CD8-positive, alpha-beta T cell (primary cell): ENCODE measurements at regions of chr1 and their contacts with region 1.

Region 1: DNA sequence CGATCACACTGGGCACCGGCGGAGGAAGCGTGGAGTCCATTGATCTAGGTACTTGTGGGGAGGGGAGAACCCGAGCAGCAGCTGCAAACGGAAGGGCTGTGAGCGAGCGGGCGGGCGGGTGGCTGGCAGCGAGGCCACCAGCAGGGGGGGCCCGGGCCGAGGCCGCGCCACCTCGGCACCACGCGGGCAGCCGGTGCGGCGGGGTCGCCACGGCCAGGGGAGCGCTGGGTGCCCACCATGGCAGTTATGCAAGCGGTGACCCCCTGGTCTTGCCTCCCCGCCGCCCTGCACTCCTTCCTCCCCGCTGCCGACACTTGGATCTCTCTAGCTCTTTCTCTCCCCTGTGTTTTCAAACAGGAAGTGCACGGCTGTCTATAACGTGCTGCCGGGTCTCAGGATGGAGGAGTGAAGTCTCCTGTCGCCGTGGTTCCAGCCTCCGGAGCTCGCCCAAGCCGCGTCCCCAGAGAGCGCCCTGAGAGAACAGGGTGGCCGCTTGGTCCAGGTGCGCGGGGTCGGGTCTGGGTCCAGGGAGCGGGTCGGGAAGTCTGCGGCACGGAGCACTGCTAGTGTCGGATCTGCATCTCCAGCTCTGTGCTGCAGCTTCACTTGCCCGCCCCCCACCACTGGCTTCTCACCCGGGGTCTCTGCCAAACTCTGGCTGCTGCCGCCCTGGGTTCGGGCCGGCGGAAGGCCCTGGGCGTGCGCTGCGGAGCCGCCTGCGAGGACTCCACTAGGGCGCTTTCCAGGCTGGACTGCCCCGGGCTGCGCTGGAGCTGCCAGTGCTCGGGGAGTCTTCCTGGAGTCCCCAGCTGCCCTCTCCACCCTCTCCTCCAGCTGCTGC is 22.7 kb downstream of the LRRC8D start:
- DNase-seq: peak; percentile 55 to 89 (median 77)
- ATAC-seq: peak; percentile 77
- H3K4me3 ChIP-seq: peak overlapping the region; percentile 79 to 92
- H3K4me3 Mint-ChIP-seq: peak overlapping the region; percentile 97
- H3K27ac ChIP-seq: peak overlapping the region; percentile 56 to 75
- H3K27ac Mint-ChIP-seq: peak overlapping the region; percentile 92
- H3K4me1 ChIP-seq: peaks cover 36% of the 10 kb centered on the region
- H3K4me1 Mint-ChIP-seq: peaks cover 53% of the 10 kb centered on the region
- H3K27me3 ChIP-seq: no peaks in the 10 kb centered on the region
- H3K27me3 Mint-ChIP-seq: no peaks in the 10 kb centered on the region
- CTCF ChIP-seq: peak; percentile 79

Region 2: DNA sequence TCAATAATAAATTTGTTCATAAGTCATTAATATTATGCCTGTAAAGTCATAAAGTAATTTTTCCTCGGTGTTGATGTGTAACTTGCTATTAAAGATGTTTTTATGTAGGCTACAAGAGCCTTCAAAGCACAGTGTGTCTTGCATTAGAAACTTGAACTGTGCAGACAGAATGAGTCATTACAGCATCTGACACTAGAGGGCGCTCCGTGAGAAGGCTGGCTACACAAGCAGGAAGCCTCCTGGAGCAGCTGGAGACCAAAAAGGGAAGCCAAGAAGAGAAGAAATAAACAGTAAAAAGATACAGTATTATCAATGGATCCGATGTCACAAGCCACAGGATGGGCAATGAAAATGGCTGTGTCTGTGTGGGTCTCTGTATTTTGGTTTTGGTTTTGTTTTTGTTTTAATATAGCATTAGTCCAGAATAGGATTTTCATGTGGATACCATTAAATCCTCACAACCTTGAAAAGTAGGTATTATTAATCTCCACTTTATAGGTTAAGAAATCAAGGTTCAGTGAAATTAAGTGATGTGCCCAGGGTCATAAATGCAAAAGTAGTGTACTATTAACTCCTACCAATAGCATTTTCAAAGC is 38.8 kb before region 1 on chr1:
- CTCF ChIA-PET with region 1: interaction called, 33 read pairs
- POLR2A ChIA-PET with region 1: interaction called, 4 read pairs
- intact Hi-C with region 1: loop called in 1 of 2 experiments (anchors 1 kb)
- DNase-seq: peak; percentile 68 to 91 (median 85)
- ATAC-seq: peak; percentile 93
- H3K4me3 ChIP-seq: no peak overlapping the region
- H3K4me3 Mint-ChIP-seq: no peak overlapping the region
- H3K27ac ChIP-seq: no peak overlapping the region
- H3K27ac Mint-ChIP-seq: no peak overlapping the region
- H3K4me1 ChIP-seq: no peaks in the 10 kb centered on the region
- H3K4me1 Mint-ChIP-seq: no peaks in the 10 kb centered on the region
- H3K27me3 ChIP-seq: no peaks in the 10 kb centered on the region
- H3K27me3 Mint-ChIP-seq: peaks cover 2% of the 10 kb centered on the region
- CTCF ChIP-seq: peak; percentile 91

Region 3: DNA sequence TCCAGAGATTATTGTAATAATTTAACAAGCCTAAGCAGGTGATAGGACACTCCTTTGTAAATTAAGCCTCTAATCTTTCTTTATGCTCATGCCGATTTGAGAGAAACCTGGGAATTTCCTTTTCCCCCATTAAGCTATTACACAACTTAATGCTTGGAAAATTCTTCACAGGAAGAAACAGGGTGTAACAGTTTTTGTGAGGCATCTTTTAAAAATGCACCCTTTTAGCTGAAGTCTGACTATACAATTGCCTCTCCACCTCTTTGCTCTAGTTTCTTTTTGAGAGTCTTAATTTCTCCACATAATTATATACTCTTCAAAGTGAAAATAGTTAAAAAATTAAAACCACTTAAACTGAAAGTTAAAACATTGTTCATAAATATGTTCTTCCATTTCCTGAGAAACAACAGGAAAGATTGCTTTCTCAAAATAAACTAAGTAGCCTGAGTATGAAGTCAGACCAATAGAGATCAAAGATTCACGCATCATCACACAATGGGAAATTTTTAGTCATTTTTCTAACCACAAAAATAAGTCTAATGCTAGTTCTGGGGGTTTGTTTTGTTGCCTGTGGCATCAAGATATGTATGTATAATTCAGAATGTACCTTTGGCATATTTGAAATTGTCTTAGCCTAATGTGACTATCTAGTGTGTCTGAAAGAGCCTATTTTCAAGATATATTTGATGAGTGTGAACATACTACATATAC is 12.1 kb after region 1 on chr1:
- CTCF ChIA-PET with region 1: interaction called, 14 read pairs
- POLR2A ChIA-PET with region 1: interaction called, 18 read pairs
- intact Hi-C with region 1: loop called (anchors 1 kb)
- DNase-seq: peak in 2 of 9 experiments; percentile 62 to 83
- ATAC-seq: peak; percentile 80
- H3K4me3 ChIP-seq: no peak overlapping the region
- H3K4me3 Mint-ChIP-seq: no peak overlapping the region
- H3K27ac ChIP-seq: peak overlapping the region; percentile 43 to 66
- H3K27ac Mint-ChIP-seq: no peak overlapping the region
- H3K4me1 ChIP-seq: peaks cover 38% of the 10 kb centered on the region
- H3K4me1 Mint-ChIP-seq: peaks cover 18% of the 10 kb centered on the region
- H3K27me3 ChIP-seq: no peaks in the 10 kb centered on the region
- H3K27me3 Mint-ChIP-seq: no peaks in the 10 kb centered on the region
- CTCF ChIP-seq: no peak

Region 4: DNA sequence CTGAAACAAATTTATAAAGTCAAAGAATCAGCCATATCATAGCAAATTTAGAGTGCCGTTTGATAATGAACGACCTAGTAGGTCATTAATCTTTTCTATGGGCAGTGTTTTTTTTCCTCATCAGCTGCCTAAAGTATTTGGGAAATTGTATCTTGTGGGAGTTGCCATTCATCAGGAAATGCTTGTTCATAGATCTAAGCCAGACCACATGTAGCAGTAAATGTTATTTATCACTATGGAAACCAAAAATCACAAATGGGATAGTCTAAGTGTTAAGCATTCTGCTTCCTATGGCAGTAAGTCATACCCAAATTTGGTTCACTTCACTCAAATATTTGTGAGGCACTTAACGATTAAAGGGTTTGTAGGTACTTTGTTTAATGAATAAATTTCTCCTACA is 30.3 kb after region 1 on chr1:
- CTCF ChIA-PET with region 1: interaction called, 12 read pairs
- POLR2A ChIA-PET with region 1: interaction called, 7 read pairs
- intact Hi-C with region 1: loop called (anchors 1 to 2 kb)
- DNase-seq: peak in 1 of 9 experiments; percentile 55
- ATAC-seq: no peak
- H3K4me3 ChIP-seq: no peak overlapping the region
- H3K4me3 Mint-ChIP-seq: no peak overlapping the region
- H3K27ac ChIP-seq: no peak overlapping the region
- H3K27ac Mint-ChIP-seq: peak overlapping the region; percentile 15
- H3K4me1 ChIP-seq: peaks cover 38% of the 10 kb centered on the region
- H3K4me1 Mint-ChIP-seq: peaks cover 80% of the 10 kb centered on the region
- H3K27me3 ChIP-seq: no peaks in the 10 kb centered on the region
- H3K27me3 Mint-ChIP-seq: no peaks in the 10 kb centered on the region
- CTCF ChIP-seq: no peak

Region 5: DNA sequence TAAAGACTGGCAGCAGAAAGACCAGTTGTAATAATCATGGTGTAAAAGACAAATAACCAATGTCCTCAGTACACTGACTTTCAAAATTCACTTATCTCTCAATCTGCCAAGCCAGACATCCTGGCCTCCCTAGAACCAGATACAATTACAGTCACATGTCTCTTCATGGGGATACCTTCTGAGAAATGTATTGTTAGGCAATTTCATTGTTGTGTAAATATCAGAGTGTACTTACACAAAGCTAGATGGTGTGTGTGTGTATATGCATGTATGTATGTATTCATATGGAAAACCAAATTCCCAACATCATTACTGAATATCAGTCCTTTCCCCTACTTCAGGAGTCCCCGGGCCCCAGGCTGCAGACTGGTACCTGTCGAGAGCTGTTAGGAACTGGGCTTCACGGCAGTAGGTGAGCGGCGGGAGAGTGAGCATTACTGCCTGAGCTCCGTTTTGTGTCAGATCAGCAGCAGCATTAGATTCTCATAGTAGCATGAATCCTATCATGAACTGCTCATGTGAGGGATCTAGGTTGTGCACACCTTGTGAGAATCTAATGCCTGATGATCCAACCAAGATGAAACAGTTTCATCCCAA is 86.1 kb after region 1 on chr1:
- CTCF ChIA-PET with region 1: interaction called, 10 read pairs
- POLR2A ChIA-PET with region 1: interaction called, 3 read pairs
- intact Hi-C with region 1: no loop called
- DNase-seq: no peak
- ATAC-seq: no peak
- H3K4me3 ChIP-seq: no peak overlapping the region
- H3K4me3 Mint-ChIP-seq: no peak overlapping the region
- H3K27ac ChIP-seq: no peak overlapping the region
- H3K27ac Mint-ChIP-seq: peak overlapping the region; percentile 32
- H3K4me1 ChIP-seq: peaks cover 7% of the 10 kb centered on the region
- H3K4me1 Mint-ChIP-seq: peaks cover 30% of the 10 kb centered on the region
- H3K27me3 ChIP-seq: no peaks in the 10 kb centered on the region
- H3K27me3 Mint-ChIP-seq: no peaks in the 10 kb centered on the region
- CTCF ChIP-seq: no peak

Region 6: DNA sequence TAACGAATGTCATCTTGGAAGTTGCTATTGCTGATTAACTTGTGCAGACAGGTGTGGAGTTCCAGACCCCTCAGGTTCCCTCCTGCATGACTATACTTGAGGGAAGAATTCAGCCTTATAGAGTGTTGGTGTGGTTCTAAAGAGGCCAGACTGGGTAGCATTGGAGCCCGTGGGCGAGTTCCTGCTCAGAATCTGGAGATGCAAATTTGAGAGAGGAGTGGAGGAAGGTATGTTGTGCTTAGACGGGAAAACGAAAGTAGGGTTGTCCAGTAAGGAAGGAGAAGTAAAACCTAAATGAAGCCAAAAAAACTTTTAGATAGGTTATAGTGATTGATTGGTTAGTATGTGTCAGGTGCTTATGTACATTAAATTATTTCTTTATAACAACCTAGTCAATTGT is 230.6 kb after region 1 on chr1:
- CTCF ChIA-PET with region 1: no interaction called
- POLR2A ChIA-PET with region 1: no interaction called
- intact Hi-C with region 1: no loop called
- DNase-seq: no peak
- ATAC-seq: no peak
- H3K4me3 ChIP-seq: no peak overlapping the region
- H3K4me3 Mint-ChIP-seq: no peak overlapping the region
- H3K27ac ChIP-seq: no peak overlapping the region
- H3K27ac Mint-ChIP-seq: no peak overlapping the region
- H3K4me1 ChIP-seq: no peaks in the 10 kb centered on the region
- H3K4me1 Mint-ChIP-seq: no peaks in the 10 kb centered on the region
- H3K27me3 ChIP-seq: no peaks in the 10 kb centered on the region
- H3K27me3 Mint-ChIP-seq: peaks cover 21% of the 10 kb centered on the region
- CTCF ChIP-seq: no peak